ENCODE measurements at regions of chr17 and their contacts with region 1.

Region 1: GRCh38 chr17:17694169-17695081 is 13.2 kb downstream of the RAI1 start:
- DNase-seq: peak; percentile 79
- ATAC-seq: peak; percentile 69
- H3K4me3 Mint-ChIP-seq: peak overlapping the region; percentile 81
- H3K27ac Mint-ChIP-seq: peak overlapping the region; percentile 98
- H3K4me1 Mint-ChIP-seq: peaks cover 66% of the 10 kb centered on the region
- H3K27me3 Mint-ChIP-seq: no peaks in the 10 kb centered on the region

Region 2: GRCh38 chr17:17766077-17766743 is 71.8 kb after region 1 on chr17:
- CTCF ChIA-PET with region 1: no interaction called
- POLR2A ChIA-PET with region 1: no interaction called
- intact Hi-C with region 1: no loop called
- DNase-seq: no peak
- ATAC-seq: peak; percentile 52
- H3K4me3 Mint-ChIP-seq: no peak overlapping the region
- H3K27ac Mint-ChIP-seq: no peak overlapping the region
- H3K4me1 Mint-ChIP-seq: peaks cover 20% of the 10 kb centered on the region
- H3K27me3 Mint-ChIP-seq: no peaks in the 10 kb centered on the region

Region 3: GRCh38 chr17:17823433-17824118 is 129.2 kb after region 1 on chr17:
- CTCF ChIA-PET with region 1: no interaction called
- POLR2A ChIA-PET with region 1: no interaction called
- intact Hi-C with region 1: loop called in 1 of 2 experiments (anchors 1 kb)
- DNase-seq: peak; percentile 90
- ATAC-seq: peak; percentile 80
- H3K4me3 Mint-ChIP-seq: peak overlapping the region; percentile 72
- H3K27ac Mint-ChIP-seq: peak overlapping the region; percentile 96
- H3K4me1 Mint-ChIP-seq: peaks cover 92% of the 10 kb centered on the region
- H3K27me3 Mint-ChIP-seq: no peaks in the 10 kb centered on the region

Region 4: GRCh38 chr17:18158022-18158600 is 463.7 kb after region 1 on chr17:
- CTCF ChIA-PET with region 1: no interaction called
- POLR2A ChIA-PET with region 1: no interaction called
- intact Hi-C with region 1: loop called in 1 of 2 experiments (anchors 1 kb)
- DNase-seq: peak; percentile 99
- ATAC-seq: peak; percentile 87
- H3K4me3 Mint-ChIP-seq: peak overlapping the region; percentile 63
- H3K27ac Mint-ChIP-seq: peak overlapping the region; percentile 81
- H3K4me1 Mint-ChIP-seq: peaks cover 9% of the 10 kb centered on the region
- H3K27me3 Mint-ChIP-seq: no peaks in the 10 kb centered on the region